ENCODE measurements at regions of chr14 and their contacts with region 1.

Region 1: DNA sequence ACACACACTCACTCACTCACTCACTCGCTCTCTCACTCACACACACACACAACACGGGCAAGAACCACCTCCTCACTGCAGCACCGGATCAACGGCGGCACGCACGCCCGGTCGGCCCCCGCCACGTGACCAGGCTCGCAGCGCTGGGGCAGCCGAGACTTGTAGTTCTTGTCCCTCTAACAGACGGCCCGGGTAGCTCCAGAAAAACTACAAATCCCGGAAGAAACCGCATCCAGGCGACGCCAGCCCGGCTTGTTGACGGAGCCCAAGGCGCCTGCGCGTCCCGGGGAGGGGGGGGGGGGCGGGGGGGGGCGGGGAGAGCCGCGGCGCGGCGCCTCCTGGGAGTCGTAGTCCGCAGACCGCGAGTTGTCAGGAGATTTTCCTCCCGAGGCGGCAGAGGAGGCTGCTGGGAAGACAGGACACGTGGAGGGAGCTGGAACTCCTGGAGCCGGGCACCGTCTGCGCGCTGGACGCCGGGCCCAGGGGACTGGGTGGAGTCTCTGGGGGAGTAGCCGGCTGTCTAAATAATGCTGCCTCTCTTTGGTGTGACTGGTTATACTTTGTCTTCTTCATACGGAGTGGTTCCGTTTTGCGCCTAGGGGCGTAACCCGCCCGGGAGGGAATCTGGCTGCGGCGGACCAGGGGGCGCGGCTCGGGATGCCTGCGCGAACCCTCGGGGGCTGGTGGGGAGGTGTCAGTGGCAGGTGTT is at the start of gene MAX:
- DNase-seq: peak; percentile 92
- H3K4me3 ChIP-seq: peak within 1 kb of the TSS; percentile 99
- H3K27me3 ChIP-seq: no peaks in the 10 kb centered on the region
- CTCF ChIP-seq: no peak
- polyA plus RNA-seq, gene MAX: 54.5 and 57.3 TPM in 2 replicates

Region 2: GRCh38 chr14:64663174-64663573 is 439.4 kb before region 1 on chr14:
- CTCF ChIA-PET with region 1: no interaction called
- POLR2A ChIA-PET with region 1: no interaction called
- DNase-seq: no peak
- H3K4me3 ChIP-seq: no peak overlapping the region
- H3K27me3 ChIP-seq: no peaks in the 10 kb centered on the region
- CTCF ChIP-seq: no peak

Region 3: GRCh38 chr14:65117769-65118701 is 15.4 kb after region 1 on chr14:
- CTCF ChIA-PET with region 1: interaction called, 4 read pairs
- POLR2A ChIA-PET with region 1: interaction called, 10 read pairs
- DNase-seq: no peak
- H3K4me3 ChIP-seq: no peak overlapping the region
- H3K27me3 ChIP-seq: no peaks in the 10 kb centered on the region; the same call in 1 of the 2 replicates
- CTCF ChIP-seq: no peak

Region 4: DNA sequence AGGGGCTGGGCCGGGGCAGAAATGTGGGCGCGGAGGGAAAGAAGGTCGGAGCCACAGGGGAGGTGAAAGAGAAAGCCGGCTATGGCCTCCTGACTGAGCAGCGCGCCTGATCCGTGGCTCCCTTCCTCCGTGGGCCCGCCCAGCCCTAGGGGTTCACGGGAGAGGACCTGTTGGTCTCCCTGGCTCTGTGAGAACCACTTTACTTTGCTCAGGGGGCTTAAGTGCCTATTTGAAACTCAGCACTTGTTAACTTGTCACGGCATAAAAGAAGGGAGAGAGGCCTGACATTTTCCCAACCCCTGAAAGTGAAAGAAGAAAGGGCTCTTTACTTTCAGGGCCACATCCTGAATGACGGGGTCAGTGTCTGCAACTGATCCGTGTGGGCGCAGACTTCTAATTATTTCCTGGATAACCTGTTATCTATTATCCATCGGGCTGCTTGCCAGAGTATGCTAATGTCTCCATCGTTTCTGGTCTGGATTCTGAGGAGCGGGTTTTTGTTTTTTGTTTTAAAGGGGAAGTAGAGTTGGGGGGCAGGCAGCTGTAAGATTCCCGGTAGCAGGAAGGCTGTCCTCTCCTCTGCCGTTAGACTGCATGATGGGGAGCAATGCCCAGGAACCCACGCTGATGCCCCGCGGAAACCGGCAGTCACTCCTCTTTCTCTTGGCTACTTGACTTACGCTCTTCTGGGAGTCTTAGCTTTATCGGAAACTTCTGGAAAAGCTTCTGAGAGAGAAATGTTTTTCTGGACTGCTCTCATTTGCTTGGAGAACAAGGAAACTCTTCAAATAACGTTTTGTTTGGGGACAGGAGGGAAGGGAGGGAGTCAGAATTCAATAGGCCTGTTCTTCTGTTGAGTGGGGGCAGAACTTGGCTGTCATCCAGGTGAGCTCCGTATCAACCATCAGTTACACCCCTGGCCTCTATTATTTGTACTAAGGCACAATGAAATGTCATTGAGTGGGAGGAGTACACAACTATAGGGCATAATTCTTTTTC is 127.5 kb after region 1 on chr14:
- CTCF ChIA-PET with region 1: no interaction called
- POLR2A ChIA-PET with region 1: no interaction called
- DNase-seq: no peak
- H3K4me3 ChIP-seq: no peak overlapping the region
- H3K27me3 ChIP-seq: no peaks in the 10 kb centered on the region
- CTCF ChIP-seq: 0 out of 2 replicates have a peak, but pooled peaks have one; percentile 4

Region 5: GRCh38 chr14:66487164-66487563 is 1384.6 kb after region 1 on chr14:
- CTCF ChIA-PET with region 1: no interaction called
- POLR2A ChIA-PET with region 1: interaction called, 18 read pairs
- DNase-seq: no peak
- H3K4me3 ChIP-seq: no peak overlapping the region
- H3K27me3 ChIP-seq: peaks cover 1% of the 10 kb centered on the region; the same call in 1 of the 2 replicates
- CTCF ChIP-seq: no peak